CD4-positive, alpha-beta memory T cell (primary cell): ENCODE measurements at regions of chr14 and their contacts with region 1.

Region 1: GRCh38 chr14:93939304-93940229 is 12.4 kb downstream of the FAM181A start:
- DNase-seq: peak; percentile 84 to 92 (median 85)
- H3K4me3 ChIP-seq: peak overlapping the region in 1 of 2 donors; percentile 41
- H3K4me3 Mint-ChIP-seq: peak overlapping the region; percentile 53 to 80 (median 72)
- H3K27ac ChIP-seq: no peak overlapping the region
- H3K27ac Mint-ChIP-seq: peak overlapping the region in 3 of 7 donors; percentile 41 to 53 (median 41)
- H3K4me1 ChIP-seq: peaks cover 3% of the 10 kb centered on the region
- H3K4me1 Mint-ChIP-seq: peaks cover 2 to 13% (median 8%) of the 10 kb centered on the region in 4 donors
- H3K27me3 ChIP-seq: no peaks in the 10 kb centered on the region
- H3K27me3 Mint-ChIP-seq: no peaks in the 10 kb centered on the region

Region 2: DNA sequence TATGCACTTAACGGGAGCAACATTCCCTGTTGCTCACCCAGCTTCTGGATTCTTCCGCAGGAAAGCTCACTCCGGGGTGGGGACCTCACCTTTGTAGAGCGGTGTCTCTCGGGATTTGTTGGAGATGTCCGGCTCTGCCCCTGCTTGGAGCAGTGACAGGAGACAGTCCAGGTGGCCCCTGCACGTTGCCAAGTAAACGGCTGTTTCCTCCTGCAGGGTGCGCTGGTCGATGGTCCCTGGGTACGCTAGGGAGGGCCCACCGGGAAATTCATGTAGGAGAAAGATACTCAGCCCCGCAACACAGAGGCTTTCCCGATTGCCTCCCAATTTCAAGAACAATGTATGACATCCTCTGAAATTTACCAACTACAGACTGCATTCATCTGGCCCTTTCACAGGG is 13.7 kb after region 1 on chr14:
- CTCF ChIA-PET with region 1: interaction called, 1,377 read pairs
- POLR2A ChIA-PET with region 1: interaction called, 87 read pairs
- intact Hi-C with region 1: loop called (anchors 1 kb)
- DNase-seq: no peak
- H3K4me3 ChIP-seq: no peak overlapping the region
- H3K4me3 Mint-ChIP-seq: peak overlapping the region in 7 of 8 donors; percentile 31 to 83 (median 68)
- H3K27ac ChIP-seq: no peak overlapping the region
- H3K27ac Mint-ChIP-seq: peak overlapping the region in 5 of 7 donors; percentile 41 to 100 (median 93)
- H3K4me1 ChIP-seq: peaks cover 65% of the 10 kb centered on the region
- H3K4me1 Mint-ChIP-seq: peaks cover 36 to 67% (median 55%) of the 10 kb centered on the region in 4 donors
- H3K27me3 ChIP-seq: no peaks in the 10 kb centered on the region
- H3K27me3 Mint-ChIP-seq: no peaks in the 10 kb centered on the region

Region 3: DNA sequence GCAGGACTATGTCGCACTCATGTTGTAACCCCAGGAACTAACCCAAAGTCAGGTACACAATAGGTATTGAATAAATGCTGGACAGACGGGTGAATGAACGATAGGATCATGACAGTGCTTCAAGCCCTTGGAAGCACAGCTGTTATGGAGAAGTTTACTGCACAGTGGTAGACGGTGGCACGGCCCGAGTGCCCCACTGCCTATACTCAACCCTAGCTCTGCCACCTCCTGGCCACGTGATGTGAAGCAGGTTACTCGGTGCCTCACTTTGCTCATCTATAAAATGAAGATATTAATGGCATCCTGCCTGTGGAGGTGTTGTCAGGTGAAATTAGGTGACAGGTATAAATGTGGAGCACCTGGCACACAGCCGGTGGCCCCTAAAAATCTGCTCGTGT is 31.0 kb after region 1 on chr14:
- CTCF ChIA-PET with region 1: interaction called, 1,377 read pairs
- POLR2A ChIA-PET with region 1: interaction called, 146 read pairs
- intact Hi-C with region 1: loop called (anchors 1 kb)
- DNase-seq: peak; percentile 69 to 78 (median 70)
- H3K4me3 ChIP-seq: peak overlapping the region; percentile 66 to 79
- H3K4me3 Mint-ChIP-seq: peak overlapping the region; percentile 86 to 94 (median 90)
- H3K27ac ChIP-seq: peak overlapping the region; percentile 41
- H3K27ac Mint-ChIP-seq: peak overlapping the region in 6 of 7 donors; percentile 74 to 93 (median 84)
- H3K4me1 ChIP-seq: peaks cover 56% of the 10 kb centered on the region
- H3K4me1 Mint-ChIP-seq: peaks cover 25 to 67% (median 45%) of the 10 kb centered on the region in 4 donors
- H3K27me3 ChIP-seq: no peaks in the 10 kb centered on the region
- H3K27me3 Mint-ChIP-seq: no peaks in the 10 kb centered on the region

Region 4: GRCh38 chr14:94001501-94002396 is 62.2 kb after region 1 on chr14:
- CTCF ChIA-PET with region 1: interaction called, 447 read pairs
- POLR2A ChIA-PET with region 1: interaction called, 51 read pairs
- intact Hi-C with region 1: no loop called
- DNase-seq: peak in 4 of 5 donors; percentile 52 to 61 (median 54)
- H3K4me3 ChIP-seq: no peak overlapping the region
- H3K4me3 Mint-ChIP-seq: peak overlapping the region in 5 of 8 donors; percentile 19 to 66 (median 36)
- H3K27ac ChIP-seq: no peak overlapping the region
- H3K27ac Mint-ChIP-seq: peak overlapping the region in 4 of 7 donors; percentile 8 to 61 (median 44)
- H3K4me1 ChIP-seq: peaks cover 8% of the 10 kb centered on the region
- H3K4me1 Mint-ChIP-seq: peaks cover 8 to 18% (median 10%) of the 10 kb centered on the region in 4 donors
- H3K27me3 ChIP-seq: no peaks in the 10 kb centered on the region
- H3K27me3 Mint-ChIP-seq: peaks cover 0 to 2% of the 10 kb centered on the region in 2 donors

Region 5: GRCh38 chr14:94021001-94021400 is 81.4 kb after region 1 on chr14:
- CTCF ChIA-PET with region 1: interaction called, 29 read pairs
- POLR2A ChIA-PET with region 1: interaction called, 4 read pairs
- intact Hi-C with region 1: no loop called
- DNase-seq: no peak
- H3K4me3 ChIP-seq: no peak overlapping the region
- H3K4me3 Mint-ChIP-seq: no peak overlapping the region
- H3K27ac ChIP-seq: no peak overlapping the region
- H3K27ac Mint-ChIP-seq: peak overlapping the region in 2 of 7 donors; percentile 5 to 31
- H3K4me1 ChIP-seq: peaks cover 27% of the 10 kb centered on the region
- H3K4me1 Mint-ChIP-seq: peaks cover 19 to 39% (median 25%) of the 10 kb centered on the region in 4 donors
- H3K27me3 ChIP-seq: no peaks in the 10 kb centered on the region
- H3K27me3 Mint-ChIP-seq: no peaks in the 10 kb centered on the region

Region 6: DNA sequence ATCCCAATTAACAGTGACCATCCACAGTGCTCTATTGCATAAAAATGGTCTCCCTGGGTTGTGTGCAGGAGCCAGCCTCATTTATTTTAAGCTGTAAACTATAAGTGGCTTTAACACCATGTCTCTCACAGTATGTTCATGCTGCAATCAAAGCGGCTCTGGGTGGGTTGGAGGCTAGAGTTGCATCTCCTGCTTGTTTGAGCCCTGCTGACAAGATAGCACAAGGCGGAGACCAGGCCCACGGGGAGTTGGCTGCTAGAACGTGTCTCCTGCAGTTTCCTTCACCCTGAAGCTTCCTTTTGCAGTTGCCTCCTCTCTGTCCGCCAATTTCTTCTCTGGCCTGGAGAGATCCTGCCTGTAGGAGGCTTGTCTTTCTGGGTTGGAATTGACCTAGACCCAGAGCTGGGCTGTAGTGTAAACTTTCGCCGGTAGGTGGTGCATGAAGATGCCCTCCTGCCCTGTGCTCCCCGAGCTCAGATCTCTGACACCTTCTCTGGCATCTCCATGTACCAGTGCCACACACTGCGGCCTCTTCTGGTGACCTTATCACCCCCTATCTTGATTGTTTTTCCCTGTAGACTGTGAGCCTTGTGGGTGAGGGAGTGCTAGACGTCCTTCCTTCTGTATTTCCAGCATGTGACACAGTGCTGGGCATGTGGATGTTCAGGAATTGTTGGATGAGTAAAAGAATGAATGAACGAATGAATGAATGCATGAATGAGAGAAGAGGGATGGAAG is 96.9 kb after region 1 on chr14:
- CTCF ChIA-PET with region 1: interaction called, 17 read pairs
- POLR2A ChIA-PET with region 1: no interaction called
- intact Hi-C with region 1: no loop called
- DNase-seq: peak; percentile 63 to 73 (median 69)
- H3K4me3 ChIP-seq: no peak overlapping the region
- H3K4me3 Mint-ChIP-seq: peak overlapping the region in 1 of 8 donors; percentile 16
- H3K27ac ChIP-seq: no peak overlapping the region
- H3K27ac Mint-ChIP-seq: peak overlapping the region in 1 of 7 donors; percentile 47
- H3K4me1 ChIP-seq: no peaks in the 10 kb centered on the region
- H3K4me1 Mint-ChIP-seq: peaks cover 5 to 7% (median 6%) of the 10 kb centered on the region in 4 donors
- H3K27me3 ChIP-seq: no peaks in the 10 kb centered on the region
- H3K27me3 Mint-ChIP-seq: no peaks in the 10 kb centered on the region

Region 7: GRCh38 chr14:94100847-94101246 is 161.3 kb after region 1 on chr14:
- CTCF ChIA-PET with region 1: no interaction called
- POLR2A ChIA-PET with region 1: no interaction called
- intact Hi-C with region 1: no loop called
- DNase-seq: no peak
- H3K4me3 ChIP-seq: no peak overlapping the region
- H3K4me3 Mint-ChIP-seq: no peak overlapping the region
- H3K27ac ChIP-seq: no peak overlapping the region
- H3K27ac Mint-ChIP-seq: no peak overlapping the region
- H3K4me1 ChIP-seq: no peaks in the 10 kb centered on the region
- H3K4me1 Mint-ChIP-seq: no peaks in the 10 kb centered on the region
- H3K27me3 ChIP-seq: no peaks in the 10 kb centered on the region
- H3K27me3 Mint-ChIP-seq: no peaks in the 10 kb centered on the region

Region 8: GRCh38 chr14:94136575-94137331 is 197.2 kb after region 1 on chr14:
- CTCF ChIA-PET with region 1: interaction called, 16 read pairs
- POLR2A ChIA-PET with region 1: interaction called, 3 read pairs
- intact Hi-C with region 1: loop called (anchors 1 kb)
- DNase-seq: peak; percentile 74 to 80 (median 77)
- H3K4me3 ChIP-seq: no peak overlapping the region
- H3K4me3 Mint-ChIP-seq: no peak overlapping the region
- H3K27ac ChIP-seq: no peak overlapping the region
- H3K27ac Mint-ChIP-seq: no peak overlapping the region
- H3K4me1 ChIP-seq: no peaks in the 10 kb centered on the region
- H3K4me1 Mint-ChIP-seq: peaks cover 0 to 10% (median 1%) of the 10 kb centered on the region in 4 donors
- H3K27me3 ChIP-seq: no peaks in the 10 kb centered on the region
- H3K27me3 Mint-ChIP-seq: peaks cover 1 to 3% of the 10 kb centered on the region in 2 donors